ENCODE measurements at regions of chr1 and their contacts with region 1.

Region 1: GRCh38 chr1:209875515-209875914 is 47.7 kb downstream of the UTP25 start:
- DNase-seq: peak; percentile 70
- H3K4me3 ChIP-seq: no peak overlapping the region
- H3K27ac ChIP-seq: no peak overlapping the region
- H3K4me1 ChIP-seq: peaks cover 27% of the 10 kb centered on the region
- H3K27me3 ChIP-seq: no peaks in the 10 kb centered on the region

Region 2: DNA sequence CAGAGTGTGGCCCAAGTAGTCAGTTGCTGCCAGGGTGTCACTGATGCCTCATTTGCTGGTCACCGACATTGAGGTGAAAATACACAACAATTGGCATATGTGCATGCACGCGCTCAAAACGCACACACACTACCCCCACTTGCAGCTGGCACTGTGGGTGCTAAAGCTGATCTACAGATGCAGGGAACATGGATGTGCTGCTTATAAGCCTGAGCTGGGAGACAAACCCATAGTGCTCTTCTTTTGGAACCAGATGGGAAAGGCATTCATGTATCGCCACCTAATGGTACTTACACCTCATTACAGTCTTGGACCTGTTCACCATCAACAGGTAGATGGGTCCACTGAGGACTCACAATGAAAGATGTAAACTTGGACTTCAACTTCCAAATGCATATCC is 362.3 kb before region 1 on chr1:
- in situ Hi-C with region 1: no loop called
- DNase-seq: peak; percentile 61
- H3K4me3 ChIP-seq: no peak overlapping the region
- H3K27ac ChIP-seq: no peak overlapping the region
- H3K4me1 ChIP-seq: no peaks in the 10 kb centered on the region
- H3K27me3 ChIP-seq: 0 out of 2 replicates have a peak, but pooled peaks cover 4% of the 10 kb centered on the region

Region 3: GRCh38 chr1:209989525-209989924 is 114.0 kb after region 1 on chr1:
- in situ Hi-C with region 1: loop called (anchors 10 kb)
- DNase-seq: peak; percentile 64
- H3K4me3 ChIP-seq: no peak overlapping the region
- H3K27ac ChIP-seq: no peak overlapping the region
- H3K4me1 ChIP-seq: no peaks in the 10 kb centered on the region
- H3K27me3 ChIP-seq: no peaks in the 10 kb centered on the region

Region 4: DNA sequence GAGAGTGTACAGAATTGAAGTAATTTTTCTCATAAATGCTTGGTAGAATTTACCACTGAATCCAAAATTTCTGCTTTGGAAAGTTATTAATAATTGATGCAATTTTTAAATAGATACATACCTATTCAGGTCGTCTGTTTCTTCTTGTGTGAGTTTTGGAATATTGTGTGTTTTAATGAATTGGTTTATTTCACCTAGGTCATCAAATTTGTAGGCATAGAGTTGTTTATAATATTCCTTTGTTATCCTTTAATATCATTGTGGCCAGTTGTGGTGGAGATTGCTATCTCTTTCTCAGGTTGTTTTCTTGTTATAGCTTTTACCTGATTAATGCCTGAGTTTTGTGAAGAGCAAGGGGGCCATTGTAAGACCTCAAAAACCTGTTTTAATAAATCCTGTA is 156.0 kb after region 1 on chr1:
- in situ Hi-C with region 1: no loop called
- DNase-seq: no peak
- H3K4me3 ChIP-seq: no peak overlapping the region
- H3K27ac ChIP-seq: no peak overlapping the region
- H3K4me1 ChIP-seq: no peaks in the 10 kb centered on the region
- H3K27me3 ChIP-seq: no peaks in the 10 kb centered on the region